K562 (cell line): ENCODE measurements at regions of chr2 and their contacts with region 1.

Region 1: GRCh38 chr2:165417009-165417408 is 52.5 kb upstream of the CSRNP3 start:
- DNase-seq: no peak
- ATAC-seq: no peak
- H3K4me3 ChIP-seq: no peak overlapping the region
- H3K27ac ChIP-seq: no peak overlapping the region
- H3K4me1 ChIP-seq: no peaks in the 10 kb centered on the region
- H3K27me3 ChIP-seq: no peaks in the 10 kb centered on the region
- CTCF ChIP-seq: no peak
- EP300 ChIP-seq: no peak
- POLR2A ChIP-seq: no peak
- RAD21 ChIP-seq: no peak

Region 2: DNA sequence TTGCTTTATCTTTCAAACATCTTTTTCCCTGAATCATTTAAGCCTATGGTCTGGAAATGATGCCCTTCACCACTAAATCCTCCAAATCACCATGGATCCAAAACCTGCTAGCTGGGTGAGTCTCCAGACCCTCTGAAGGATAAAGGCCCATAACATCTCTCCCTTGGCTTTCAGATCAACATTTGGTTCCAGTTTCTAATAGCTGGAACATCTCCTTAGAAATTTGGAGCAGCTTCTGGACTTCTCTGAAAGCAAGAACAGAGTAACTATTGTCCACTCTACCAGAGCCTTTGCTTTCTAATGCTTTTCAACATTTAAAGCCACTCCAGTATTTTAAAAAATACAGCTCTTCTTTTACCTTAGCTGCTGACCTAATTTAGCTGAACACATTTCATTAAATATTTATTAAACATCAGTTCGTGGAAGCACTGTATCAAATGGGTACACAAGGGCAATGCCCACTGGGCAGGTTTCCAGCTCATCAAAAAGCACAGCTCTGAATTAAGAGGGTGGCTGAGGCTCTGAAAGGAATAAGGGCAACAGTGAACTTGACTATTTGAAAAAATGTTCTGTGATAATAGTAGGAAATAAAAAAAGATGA is 301.7 kb after region 1 on chr2:
- CTCF ChIA-PET with region 1: no interaction called
- POLR2A ChIA-PET with region 1: no interaction called
- in situ Hi-C with region 1: no loop called
- intact Hi-C with region 1: no loop called
- DNase-seq: no peak
- ATAC-seq: no peak
- H3K4me3 ChIP-seq: no peak overlapping the region
- H3K27ac ChIP-seq: no peak overlapping the region
- H3K4me1 ChIP-seq: no peaks in the 10 kb centered on the region
- H3K27me3 ChIP-seq: no peaks in the 10 kb centered on the region
- CTCF ChIP-seq: no peak
- EP300 ChIP-seq: no peak
- POLR2A ChIP-seq: no peak
- RAD21 ChIP-seq: no peak

Region 3: DNA sequence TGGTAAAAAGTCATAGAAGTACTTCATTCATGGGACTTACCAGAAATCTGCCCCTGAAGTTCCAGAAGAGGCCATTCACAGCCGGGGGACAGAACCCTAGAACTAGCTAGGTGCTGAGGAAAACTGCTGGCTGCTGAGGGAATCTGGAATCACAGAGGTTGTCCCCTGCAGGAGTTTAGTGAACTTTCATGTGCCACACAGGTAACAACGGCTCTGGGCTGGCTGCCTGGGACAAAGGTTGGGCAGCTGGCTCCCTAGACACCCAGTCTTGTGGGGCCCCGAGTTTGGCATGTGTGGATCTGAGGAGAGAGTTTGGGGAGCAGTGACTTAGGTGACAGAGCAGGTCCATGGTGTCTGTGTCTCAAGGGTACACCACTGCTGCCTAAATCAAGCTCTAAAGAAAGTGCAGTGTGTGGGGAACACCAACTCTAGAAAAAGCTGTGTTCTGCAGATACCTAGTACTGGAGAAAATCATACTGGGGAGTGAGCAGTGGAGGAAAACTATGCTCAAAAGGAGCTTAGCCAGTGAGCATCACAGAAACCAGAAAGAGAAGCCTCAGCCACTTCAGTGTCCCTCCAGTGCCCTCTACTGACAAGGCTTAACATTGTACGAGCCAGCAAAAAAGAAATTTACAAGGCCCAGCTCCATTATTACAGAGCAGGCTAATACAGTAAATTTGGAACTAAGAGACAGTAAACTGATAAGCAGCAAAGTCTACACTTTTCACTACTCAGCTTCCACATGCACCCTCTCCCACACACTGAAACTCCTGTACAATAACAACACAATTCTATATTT is 361.8 kb after region 1 on chr2:
- CTCF ChIA-PET with region 1: no interaction called
- POLR2A ChIA-PET with region 1: no interaction called
- in situ Hi-C with region 1: no loop called
- intact Hi-C with region 1: loop called (anchors 10 kb)
- DNase-seq: peak in 2 of 4 experiments; percentile 12 to 14
- ATAC-seq: peak; percentile 69; the same call in 1 of the 3 replicates
- H3K4me3 ChIP-seq: no peak overlapping the region
- H3K27ac ChIP-seq: no peak overlapping the region
- H3K4me1 ChIP-seq: no peaks in the 10 kb centered on the region
- H3K27me3 ChIP-seq: no peaks in the 10 kb centered on the region
- CTCF ChIP-seq: peak in 2 of 3 experiments; percentile 37 to 41; a peak in 3 of 6 replicates
- EP300 ChIP-seq: no peak
- POLR2A ChIP-seq: no peak
- RAD21 ChIP-seq: peak in 1 of 2 experiments; percentile 40; a peak in 2 of 4 replicates